ENCODE measurements at regions of chr12 and their contacts with region 1.

Region 1: DNA sequence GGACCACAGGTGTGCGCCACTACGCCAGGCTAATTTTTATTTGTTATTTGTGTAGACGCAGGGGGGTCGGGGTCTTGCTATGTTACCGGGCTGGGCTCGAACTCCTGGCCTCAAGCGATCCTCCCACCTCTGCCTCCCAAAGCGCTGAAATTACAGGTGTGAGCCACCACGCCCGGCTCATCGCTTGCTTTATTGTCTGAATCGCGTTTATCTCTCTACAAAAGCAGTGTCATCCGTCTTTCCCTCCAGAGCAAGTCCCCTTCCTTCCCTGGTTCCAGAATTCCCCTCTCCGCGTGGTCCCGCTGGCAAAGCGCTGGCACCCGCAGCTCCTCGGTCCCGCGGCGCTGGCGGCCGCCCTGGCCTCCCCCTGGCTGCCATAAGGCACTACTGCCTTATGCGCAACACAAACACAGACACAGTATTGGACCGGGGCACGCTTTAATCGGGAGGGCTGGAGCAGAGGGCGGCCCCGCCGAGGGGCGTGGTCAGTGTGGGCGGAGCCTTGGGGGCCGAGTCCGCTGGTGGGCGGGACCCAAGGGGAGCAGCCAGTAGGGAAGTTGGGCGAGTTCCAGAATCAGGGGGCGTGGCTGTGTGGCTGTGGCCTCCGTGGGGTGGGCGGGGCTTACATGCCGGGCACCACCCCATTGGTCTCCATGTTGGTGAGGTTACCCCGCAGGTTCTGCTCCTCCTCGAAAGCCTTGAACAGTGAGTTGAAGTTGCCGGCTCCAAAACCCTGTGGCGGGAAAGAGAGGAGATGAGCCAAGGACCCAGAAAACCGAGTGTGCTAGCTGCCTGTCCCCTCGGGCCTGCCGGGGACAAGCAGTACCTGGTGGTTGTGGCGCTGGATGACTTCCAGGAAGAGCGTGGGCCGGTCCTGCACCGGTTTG is 19.3 kb downstream of the HPD start:
- DNase-seq: peak; percentile 99
- H3K4me3 Mint-ChIP-seq: peak overlapping the region; percentile 95
- H3K27ac Mint-ChIP-seq: peak overlapping the region; percentile 79
- H3K4me1 Mint-ChIP-seq: peaks cover 16% of the 10 kb centered on the region
- H3K27me3 Mint-ChIP-seq: peaks cover 4% of the 10 kb centered on the region

Region 2: GRCh38 chr12:121712461-121713256 is 126.7 kb before region 1 on chr12 and contains the start of gene TMEM120B:
- intact Hi-C with region 1: loop called (anchors 1 kb)
- DNase-seq: peak; percentile 83
- H3K4me3 Mint-ChIP-seq: peak within 1 kb of the TSS; percentile 97
- H3K27ac Mint-ChIP-seq: peak within 1 kb of the TSS; percentile 91
- H3K4me1 Mint-ChIP-seq: peaks cover 28% of the 10 kb centered on the region
- H3K27me3 Mint-ChIP-seq: peaks cover 4% of the 10 kb centered on the region
- total RNA-seq, gene TMEM120B: 17.5 and 18.3 TPM in 2 replicates

Region 3: GRCh38 chr12:121802846-121803630 is 36.3 kb before region 1 on chr12:
- intact Hi-C with region 1: loop called (anchors 2 kb)
- DNase-seq: peak; percentile 83
- H3K4me3 Mint-ChIP-seq: peak overlapping the region; percentile 87
- H3K27ac Mint-ChIP-seq: peak overlapping the region; percentile 97
- H3K4me1 Mint-ChIP-seq: peaks cover 40% of the 10 kb centered on the region
- H3K27me3 Mint-ChIP-seq: peaks cover 2% of the 10 kb centered on the region

Region 4: DNA sequence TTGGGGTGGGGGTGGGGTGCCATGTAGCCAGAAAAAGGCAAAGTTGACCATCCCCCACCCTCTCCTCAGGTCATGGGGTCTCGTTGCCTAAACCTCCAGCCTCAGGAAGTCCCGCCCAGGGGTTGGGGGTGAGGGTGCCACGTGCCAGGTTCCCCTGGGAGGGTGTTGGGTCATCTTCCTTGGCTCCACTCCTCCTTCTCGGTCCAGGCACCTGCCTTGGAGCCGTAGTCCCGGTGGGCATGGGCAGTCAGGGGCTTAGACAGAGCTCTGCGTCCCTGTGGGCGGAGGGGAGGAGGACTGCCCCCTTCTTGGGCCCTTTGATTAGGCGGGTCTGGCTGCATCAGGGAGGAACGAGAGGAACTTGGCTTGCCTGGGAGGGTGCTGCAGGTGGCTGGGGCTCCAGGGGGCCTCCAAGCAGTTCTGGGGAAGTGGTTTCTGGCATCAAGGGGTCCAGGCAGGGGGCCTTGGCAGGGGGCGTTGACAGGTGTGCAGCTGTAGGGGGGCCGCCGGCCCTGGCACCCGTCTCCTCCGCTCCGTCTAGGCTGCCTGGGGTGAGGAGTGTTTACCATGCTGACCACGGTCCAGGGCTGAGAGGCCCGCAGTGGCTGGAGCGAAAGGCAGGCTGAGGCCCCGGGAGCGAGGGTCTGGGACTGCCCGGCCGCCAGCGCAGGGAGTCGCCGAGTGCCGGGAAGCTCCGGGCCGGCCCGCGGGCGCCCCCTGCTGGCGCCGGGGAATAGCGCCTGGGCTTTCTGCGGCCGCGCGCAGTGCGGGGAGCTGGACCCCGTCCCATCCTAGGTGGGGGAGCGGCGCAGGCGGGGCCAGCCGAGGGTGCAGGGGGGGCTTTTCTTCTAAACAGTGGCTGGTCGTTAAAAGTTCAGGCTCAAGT is 27.7 kb before region 1 on chr12:
- intact Hi-C with region 1: loop called (anchors 1 kb)
- DNase-seq: peak; percentile 67
- H3K4me3 Mint-ChIP-seq: peak overlapping the region; percentile 85
- H3K27ac Mint-ChIP-seq: peak overlapping the region; percentile 40
- H3K4me1 Mint-ChIP-seq: peaks cover 35% of the 10 kb centered on the region
- H3K27me3 Mint-ChIP-seq: no peaks in the 10 kb centered on the region

Region 5: GRCh38 chr12:121872546-121873215 is 33.3 kb after region 1 on chr12:
- intact Hi-C with region 1: no loop called
- DNase-seq: no peak
- H3K4me3 Mint-ChIP-seq: no peak overlapping the region
- H3K27ac Mint-ChIP-seq: no peak overlapping the region
- H3K4me1 Mint-ChIP-seq: no peaks in the 10 kb centered on the region
- H3K27me3 Mint-ChIP-seq: peaks cover 4% of the 10 kb centered on the region

Region 6: DNA sequence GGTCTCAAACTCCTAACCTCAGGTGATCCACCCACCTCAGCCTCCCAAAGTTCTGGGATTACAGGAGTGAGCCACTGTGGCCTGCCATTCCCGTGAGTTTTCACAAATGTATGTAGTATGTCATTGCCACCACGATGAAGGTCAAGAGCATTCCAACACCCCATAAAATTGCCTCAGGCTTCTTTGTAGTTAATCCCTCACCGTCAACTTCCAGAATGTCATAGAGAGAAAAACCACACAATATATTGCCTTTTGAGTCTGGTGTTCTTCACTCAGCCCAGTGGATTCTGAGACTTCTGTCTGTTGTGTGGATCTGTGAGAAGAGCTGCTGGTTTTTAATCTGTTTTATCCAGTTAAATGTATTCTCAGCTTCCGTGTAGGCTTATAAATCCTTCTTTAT is 66.4 kb after region 1 on chr12:
- intact Hi-C with region 1: no loop called
- DNase-seq: no peak
- H3K4me3 Mint-ChIP-seq: no peak overlapping the region
- H3K27ac Mint-ChIP-seq: no peak overlapping the region
- H3K4me1 Mint-ChIP-seq: peaks cover 8% of the 10 kb centered on the region
- H3K27me3 Mint-ChIP-seq: no peaks in the 10 kb centered on the region

Region 7: DNA sequence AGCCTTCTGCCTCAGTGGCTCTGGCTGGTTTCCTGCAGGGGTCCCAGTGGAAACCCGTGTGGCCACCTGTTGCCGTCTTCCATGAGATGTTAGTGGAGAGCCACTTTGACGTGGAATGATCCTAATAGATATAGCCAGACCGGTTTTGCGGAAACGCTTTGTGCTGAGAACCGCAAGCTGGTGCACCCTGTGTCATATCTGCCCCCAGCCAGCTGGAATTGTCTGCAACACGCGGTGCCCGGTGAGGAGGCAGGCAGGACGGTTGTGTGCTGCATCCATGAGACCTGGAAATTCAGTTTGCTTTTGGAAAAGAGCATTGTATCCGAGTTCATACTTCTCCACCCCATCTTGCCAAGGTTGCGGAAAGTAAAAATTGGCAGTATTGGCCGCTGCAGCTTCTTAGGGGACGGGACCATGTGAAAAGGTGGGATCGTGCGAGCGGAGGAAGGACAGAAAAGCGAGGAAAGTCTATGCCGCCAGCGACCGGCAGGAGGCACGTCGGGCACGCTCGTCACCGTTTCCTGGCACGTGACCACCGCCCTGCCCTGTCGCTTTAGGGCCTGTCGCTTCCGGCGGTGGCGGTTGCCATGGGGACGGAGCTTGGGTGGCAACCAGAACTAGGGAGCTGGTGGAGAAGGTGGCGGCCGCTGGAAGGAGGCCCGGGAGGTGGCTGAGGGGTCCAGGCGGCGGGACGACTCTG is 78.8 kb after region 1 on chr12 and contains the start of gene CFAP251:
- intact Hi-C with region 1: loop called (anchors 1 kb)
- DNase-seq: peak; percentile 92
- H3K4me3 Mint-ChIP-seq: peak within 1 kb of the TSS; percentile 80
- H3K27ac Mint-ChIP-seq: peak within 1 kb of the TSS; percentile 71
- H3K4me1 Mint-ChIP-seq: peaks cover 15% of the 10 kb centered on the region
- H3K27me3 Mint-ChIP-seq: peaks cover 2% of the 10 kb centered on the region
- total RNA-seq, gene CFAP251: 0.65 and 0.76 TPM in 2 replicates